ENCODE measurements at regions of chr12 and their contacts with region 1.

Region 1: GRCh38 chr12:121230538-121230907 is 20.6 kb downstream of the P2RX4 start:
- DNase-seq: no peak
- H3K4me3 ChIP-seq: no peak overlapping the region
- CTCF ChIP-seq: no peak

Region 2: GRCh38 chr12:121060149-121061001 is 170.1 kb before region 1 on chr12:
- CTCF ChIA-PET with region 1: interaction called, 16 read pairs
- POLR2A ChIA-PET with region 1: no interaction called
- DNase-seq: no peak
- H3K4me3 ChIP-seq: peak overlapping the region; percentile 42
- CTCF ChIP-seq: peak; percentile 65

Region 3: GRCh38 chr12:121214855-121215745 is 15.4 kb before region 1 on chr12:
- CTCF ChIA-PET with region 1: interaction called, 29 read pairs
- POLR2A ChIA-PET with region 1: no interaction called
- DNase-seq: peak; percentile 42
- H3K4me3 ChIP-seq: no peak overlapping the region
- CTCF ChIP-seq: no peak

Region 4: DNA sequence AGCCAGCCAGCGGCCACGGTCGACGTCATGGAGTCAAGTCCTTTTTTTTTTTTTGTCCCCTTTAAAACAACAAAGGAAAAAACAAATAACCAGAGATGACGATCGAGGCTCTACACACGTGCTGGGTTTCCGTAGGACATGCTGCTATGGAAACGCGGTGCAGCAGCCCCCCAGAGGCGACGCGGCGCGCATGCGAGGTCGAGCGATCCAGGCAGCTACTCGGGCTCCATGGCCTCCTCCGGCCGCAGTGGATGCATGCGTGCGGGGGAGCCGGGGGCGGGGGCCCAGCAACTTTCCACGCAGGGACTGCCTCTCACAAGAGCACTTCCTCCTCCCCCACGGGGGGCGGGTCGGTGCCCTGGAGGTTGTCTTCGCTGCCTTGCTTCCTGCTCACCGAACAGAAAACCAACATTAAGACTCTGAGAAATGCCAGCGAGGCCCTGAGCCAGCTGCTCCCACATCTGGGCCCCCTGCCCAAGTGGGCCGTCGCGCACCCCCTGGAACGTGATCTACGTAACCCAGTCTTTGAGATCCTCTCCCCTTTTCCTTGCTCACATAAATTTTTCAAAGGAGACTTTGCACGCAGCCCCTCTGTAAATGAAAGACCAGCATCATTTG is 10.1 kb after region 1 on chr12:
- CTCF ChIA-PET with region 1: interaction called, 60 read pairs
- POLR2A ChIA-PET with region 1: no interaction called
- DNase-seq: no peak
- H3K4me3 ChIP-seq: no peak overlapping the region
- CTCF ChIP-seq: no peak